Activated naive CD4-positive, alpha-beta T cell treated with anti-CD3 and anti-CD28 coated beads for 36 hours (primary cell): ENCODE measurements at regions of chr16 and their contacts with region 1.

Region 1: GRCh38 chr16:17578921-17579874 is 108.4 kb upstream of the XYLT1 start:
- DNase-seq: peak; percentile 75
- H3K4me3 Mint-ChIP-seq: no peak overlapping the region
- H3K27ac Mint-ChIP-seq: no peak overlapping the region
- H3K4me1 Mint-ChIP-seq: no peaks in the 10 kb centered on the region
- H3K27me3 Mint-ChIP-seq: peaks cover 2% of the 10 kb centered on the region

Region 2: DNA sequence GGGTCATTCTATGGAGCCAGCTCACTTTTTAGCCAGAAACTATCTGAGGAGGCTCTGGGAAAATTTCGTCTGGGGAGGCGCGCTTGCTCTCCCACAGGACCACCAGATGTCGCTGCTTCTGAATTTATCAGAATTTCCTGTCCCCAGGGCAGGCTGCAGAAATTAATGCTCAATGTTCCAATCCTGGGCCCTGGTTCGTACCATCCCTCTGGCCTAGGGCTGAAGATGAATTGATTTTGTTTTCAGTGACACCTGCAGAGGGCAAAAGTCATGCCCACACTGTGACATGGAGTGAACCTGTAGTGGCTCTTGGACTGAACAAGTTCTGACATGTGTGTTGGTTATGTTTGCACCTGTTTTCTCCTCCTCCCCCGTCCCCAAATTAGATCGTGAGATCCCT is 717.7 kb before region 1 on chr16:
- CTCF ChIA-PET with region 1: interaction called, 4 read pairs
- intact Hi-C with region 1: loop called (anchors 5 kb)
- DNase-seq: peak; percentile 73
- H3K4me3 Mint-ChIP-seq: no peak overlapping the region
- H3K27ac Mint-ChIP-seq: peak overlapping the region; percentile 10
- H3K4me1 Mint-ChIP-seq: no peaks in the 10 kb centered on the region
- H3K27me3 Mint-ChIP-seq: peaks cover 8% of the 10 kb centered on the region

Region 3: GRCh38 chr16:17476414-17477270 is 102.6 kb before region 1 on chr16:
- CTCF ChIA-PET with region 1: interaction called, 8 read pairs
- intact Hi-C with region 1: loop called (anchors 1 kb)
- DNase-seq: peak; percentile 56
- H3K4me3 Mint-ChIP-seq: no peak overlapping the region
- H3K27ac Mint-ChIP-seq: no peak overlapping the region
- H3K4me1 Mint-ChIP-seq: peaks cover 23% of the 10 kb centered on the region
- H3K27me3 Mint-ChIP-seq: no peaks in the 10 kb centered on the region

Region 4: GRCh38 chr16:17556276-17557052 is 22.7 kb before region 1 on chr16:
- CTCF ChIA-PET with region 1: interaction called, 16 read pairs
- intact Hi-C with region 1: no loop called
- DNase-seq: peak; percentile 8
- H3K4me3 Mint-ChIP-seq: no peak overlapping the region
- H3K27ac Mint-ChIP-seq: no peak overlapping the region
- H3K4me1 Mint-ChIP-seq: peaks cover 2% of the 10 kb centered on the region
- H3K27me3 Mint-ChIP-seq: peaks cover 6% of the 10 kb centered on the region

Region 5: GRCh38 chr16:17589898-17590297 is 10.7 kb after region 1 on chr16:
- CTCF ChIA-PET with region 1: interaction called, 13 read pairs
- intact Hi-C with region 1: no loop called
- DNase-seq: no peak
- H3K4me3 Mint-ChIP-seq: no peak overlapping the region
- H3K27ac Mint-ChIP-seq: no peak overlapping the region
- H3K4me1 Mint-ChIP-seq: no peaks in the 10 kb centered on the region
- H3K27me3 Mint-ChIP-seq: peaks cover 7% of the 10 kb centered on the region

Region 6: GRCh38 chr16:17801068-17801467 is 221.9 kb after region 1 on chr16:
- CTCF ChIA-PET with region 1: no interaction called
- intact Hi-C with region 1: no loop called
- DNase-seq: no peak
- H3K4me3 Mint-ChIP-seq: no peak overlapping the region
- H3K27ac Mint-ChIP-seq: no peak overlapping the region
- H3K4me1 Mint-ChIP-seq: no peaks in the 10 kb centered on the region
- H3K27me3 Mint-ChIP-seq: peaks cover 18% of the 10 kb centered on the region